Ascending aorta (tissue), 2 donors: ENCODE measurements at regions of chr4 and their contacts with region 1.

Region 1: GRCh38 chr4:123102897-123103471 is 180.6 kb upstream of the NUDT6 start:
- DNase-seq: no peak
- H3K4me3 ChIP-seq: no peak overlapping the region
- H3K27ac ChIP-seq: no peak overlapping the region
- H3K4me1 ChIP-seq: no peaks in the 10 kb centered on the region
- H3K27me3 ChIP-seq: no peaks in the 10 kb centered on the region
- CTCF ChIP-seq: peak; percentile 63 to 83 (median 63)

Region 2: GRCh38 chr4:123168812-123169211 is 65.8 kb after region 1 on chr4:
- intact Hi-C with region 1: no loop called
- DNase-seq: no peak
- H3K4me3 ChIP-seq: no peak overlapping the region
- H3K27ac ChIP-seq: no peak overlapping the region
- H3K4me1 ChIP-seq: no peaks in the 10 kb centered on the region
- H3K27me3 ChIP-seq: no peaks in the 10 kb centered on the region
- CTCF ChIP-seq: no peak

Region 3: DNA sequence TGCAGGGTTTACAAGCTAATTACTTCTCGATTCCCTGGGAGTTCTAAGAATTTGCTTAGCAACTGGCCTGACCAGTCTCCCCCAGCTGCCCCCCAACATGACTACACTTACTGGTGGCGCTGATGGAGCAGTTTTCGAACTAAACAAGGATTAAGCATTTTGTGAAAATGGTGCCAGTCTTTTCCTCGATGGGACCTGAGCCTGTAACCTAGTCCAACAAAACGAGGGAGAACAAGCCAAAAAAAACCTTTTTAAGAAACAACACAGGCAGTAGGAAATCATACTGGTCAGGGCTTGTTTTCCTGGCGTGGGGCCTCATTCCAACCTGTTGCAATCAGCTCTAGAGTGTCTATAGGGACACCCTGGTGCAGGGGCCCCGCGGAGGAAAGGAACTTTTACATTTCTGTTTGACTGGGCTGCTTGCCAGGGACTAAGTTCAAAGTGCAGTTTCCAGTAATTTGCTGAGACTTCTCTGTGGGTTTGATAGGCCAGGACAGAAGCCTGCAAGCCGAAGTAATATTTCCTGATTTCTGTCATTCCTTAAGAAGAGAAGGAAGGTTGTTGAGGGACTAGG is 452.3 kb after region 1 on chr4:
- intact Hi-C with region 1: loop called (anchors 10 kb)
- DNase-seq: peak; percentile 21 to 94
- H3K4me3 ChIP-seq: peak overlapping the region in 1 of 2 donors; percentile 56
- H3K27ac ChIP-seq: peak overlapping the region; percentile 83 to 87
- H3K4me1 ChIP-seq: peaks cover 3 to 34% of the 10 kb centered on the region in 2 donors
- H3K27me3 ChIP-seq: no peaks in the 10 kb centered on the region
- CTCF ChIP-seq: no peak

Region 4: DNA sequence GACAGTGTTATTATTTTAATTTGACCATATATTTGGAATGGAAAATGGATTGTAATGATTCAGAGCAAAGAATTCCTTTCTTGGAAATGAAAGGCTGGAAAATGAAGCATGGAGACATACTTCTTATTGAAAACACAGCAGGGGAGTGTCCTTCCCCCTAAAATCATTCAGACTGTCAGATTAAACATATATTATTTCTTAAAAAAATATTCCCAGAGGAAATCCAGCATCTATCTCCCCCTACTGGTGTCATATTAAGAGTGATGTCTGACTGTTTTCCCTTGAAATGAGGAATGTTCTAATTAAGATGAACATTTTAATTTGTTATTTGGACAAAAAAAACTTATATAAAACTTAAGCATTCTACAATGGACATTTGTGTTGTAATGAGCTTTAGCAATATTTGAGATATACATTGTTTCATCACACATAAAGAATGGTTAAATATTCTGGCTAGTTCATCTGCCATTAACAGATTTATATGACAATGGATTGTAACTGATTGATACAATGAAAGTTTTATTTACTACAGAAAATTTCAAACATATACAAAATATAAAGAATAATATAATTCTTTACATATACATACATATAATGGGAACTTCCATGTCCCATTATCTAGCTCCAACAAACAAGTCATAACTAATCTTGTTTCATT is 558.2 kb after region 1 on chr4:
- intact Hi-C with region 1: loop called (anchors 10 kb)
- DNase-seq: no peak
- H3K4me3 ChIP-seq: no peak overlapping the region
- H3K27ac ChIP-seq: no peak overlapping the region
- H3K4me1 ChIP-seq: no peaks in the 10 kb centered on the region
- H3K27me3 ChIP-seq: no peaks in the 10 kb centered on the region
- CTCF ChIP-seq: peak; percentile 28 to 50 (median 42)

Region 5: GRCh38 chr4:123785538-123785937 is 682.6 kb after region 1 on chr4:
- intact Hi-C with region 1: loop called (anchors 10 kb)
- DNase-seq: peak in 1 of 2 donors; percentile 91
- H3K4me3 ChIP-seq: no peak overlapping the region
- H3K27ac ChIP-seq: peak overlapping the region; percentile 71 to 72
- H3K4me1 ChIP-seq: peaks cover 7 to 26% of the 10 kb centered on the region in 2 donors
- H3K27me3 ChIP-seq: no peaks in the 10 kb centered on the region
- CTCF ChIP-seq: no peak

Region 6: GRCh38 chr4:124111922-124112321 is 1008.9 kb after region 1 on chr4:
- intact Hi-C with region 1: loop called (anchors 2 kb)
- DNase-seq: no peak
- H3K4me3 ChIP-seq: no peak overlapping the region
- H3K27ac ChIP-seq: no peak overlapping the region
- H3K4me1 ChIP-seq: no peaks in the 10 kb centered on the region
- H3K27me3 ChIP-seq: no peaks in the 10 kb centered on the region
- CTCF ChIP-seq: peak; percentile 43 to 65 (median 52)

Region 7: DNA sequence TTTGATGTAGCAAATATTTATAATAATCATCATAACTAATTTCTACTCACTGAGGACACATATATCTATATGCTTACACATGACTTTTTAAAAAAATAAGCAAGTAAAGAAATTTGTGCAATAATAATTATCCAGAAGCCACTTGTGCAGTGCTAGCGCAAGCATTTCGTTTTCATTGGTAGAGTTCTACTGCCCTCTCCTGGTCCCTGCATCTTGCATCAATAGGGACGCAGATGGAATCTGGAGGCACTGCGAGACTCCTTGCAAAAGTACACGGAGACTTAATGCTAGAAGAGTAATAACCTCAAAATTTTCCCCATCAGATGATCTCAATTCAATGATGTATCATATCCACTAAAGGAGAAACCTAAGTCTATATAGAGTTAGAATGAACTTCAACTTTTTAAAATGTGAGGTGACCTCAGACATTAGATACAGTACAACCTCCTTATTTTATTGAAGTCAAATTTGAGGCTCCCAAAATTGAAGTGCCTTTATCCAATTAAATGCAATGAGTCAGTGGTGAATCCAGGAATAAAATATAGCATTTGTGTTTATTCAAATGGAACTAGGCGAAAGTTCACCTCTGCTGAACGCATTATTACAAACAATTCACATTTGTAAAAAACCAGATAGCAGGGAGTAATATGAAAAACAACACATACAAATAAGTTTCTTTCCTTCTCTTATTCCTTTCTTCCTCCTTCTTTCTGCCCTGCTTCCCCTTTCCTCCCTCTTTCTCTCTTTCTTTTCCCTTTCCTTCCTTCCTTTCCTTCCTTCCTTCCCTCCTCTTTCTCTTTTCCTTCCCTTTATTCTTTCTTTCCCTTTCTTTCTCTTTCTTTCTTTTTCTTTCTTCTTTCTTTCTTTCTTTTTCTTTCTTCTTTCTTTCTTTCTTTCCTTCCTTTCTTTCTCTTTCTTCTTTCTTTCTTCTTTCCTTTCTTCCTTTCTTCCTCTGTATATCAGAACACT is 1159.5 kb after region 1 on chr4:
- intact Hi-C with region 1: loop called (anchors 2 kb)
- DNase-seq: peak in 1 of 2 donors; percentile 82
- H3K4me3 ChIP-seq: no peak overlapping the region
- H3K27ac ChIP-seq: no peak overlapping the region
- H3K4me1 ChIP-seq: no peaks in the 10 kb centered on the region
- H3K27me3 ChIP-seq: no peaks in the 10 kb centered on the region
- CTCF ChIP-seq: peak; percentile 61 to 86 (median 79)

Region 8: GRCh38 chr4:124322234-124323065 is 1219.5 kb after region 1 on chr4:
- intact Hi-C with region 1: loop called (anchors 5 kb)
- DNase-seq: no peak
- H3K4me3 ChIP-seq: no peak overlapping the region
- H3K27ac ChIP-seq: no peak overlapping the region
- H3K4me1 ChIP-seq: no peaks in the 10 kb centered on the region
- H3K27me3 ChIP-seq: no peaks in the 10 kb centered on the region
- CTCF ChIP-seq: peak; percentile 37 to 59 (median 55)